GM12878 (cell line): ENCODE measurements at regions of chr17 and their contacts with region 1.

Region 1: DNA sequence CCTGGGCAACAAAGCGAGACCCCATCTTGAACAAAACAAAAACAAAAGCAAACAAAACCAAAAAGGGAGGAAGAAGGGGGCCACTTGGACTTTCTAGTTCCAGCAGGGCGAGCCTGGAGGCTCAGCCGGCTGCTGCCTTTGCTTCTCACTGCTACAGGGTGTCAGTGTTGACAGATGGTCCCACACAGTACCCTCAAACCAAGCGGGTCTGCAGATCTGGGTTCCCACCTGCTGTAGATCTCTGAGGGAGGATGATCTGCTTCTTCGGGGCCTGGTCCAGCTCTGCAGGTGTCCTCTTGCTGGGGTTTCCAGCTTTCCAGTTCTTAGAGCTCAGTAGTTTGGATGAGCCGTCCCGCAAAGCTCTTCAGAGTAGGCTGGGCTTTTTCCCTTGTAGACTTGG is 6.7 kb downstream of the CSHL1 start:
- DNase-seq: no peak
- ATAC-seq: no peak
- H3K4me3 ChIP-seq: no peak overlapping the region
- H3K27ac ChIP-seq: no peak overlapping the region
- H3K4me1 ChIP-seq: no peaks in the 10 kb centered on the region
- H3K27me3 ChIP-seq: no peaks in the 10 kb centered on the region
- CTCF ChIP-seq: no peak
- EP300 ChIP-seq: no peak
- POLR2A ChIP-seq: no peak
- RAD21 ChIP-seq: no peak

Region 2: GRCh38 chr17:63881876-63882601 is 22.3 kb before region 1 on chr17 and contains the start of gene GH2:
- CTCF ChIA-PET with region 1: interaction called, 49 read pairs
- POLR2A ChIA-PET with region 1: no interaction called
- RAD21 ChIA-PET with region 1: no interaction called
- SMC1A ChIA-PET with region 1: no interaction called
- in situ Hi-C with region 1: no loop called
- intact Hi-C with region 1: no loop called
- DNase-seq: no peak
- ATAC-seq: peak; percentile 95
- H3K4me3 ChIP-seq: no peak within 1 kb of the TSS
- H3K27ac ChIP-seq: no peak within 1 kb of the TSS
- H3K4me1 ChIP-seq: no peaks in the 10 kb centered on the region
- H3K27me3 ChIP-seq: no peaks in the 10 kb centered on the region
- CTCF ChIP-seq: peak; percentile 69 to 84 (median 72)
- EP300 ChIP-seq: no peak
- POLR2A ChIP-seq: no peak
- RAD21 ChIP-seq: no peak
- polyA plus RNA-seq, gene GH2: not detected